GM18951 (cell line): ENCODE measurements at regions of chr4 and their contacts with region 1.

Region 1: DNA sequence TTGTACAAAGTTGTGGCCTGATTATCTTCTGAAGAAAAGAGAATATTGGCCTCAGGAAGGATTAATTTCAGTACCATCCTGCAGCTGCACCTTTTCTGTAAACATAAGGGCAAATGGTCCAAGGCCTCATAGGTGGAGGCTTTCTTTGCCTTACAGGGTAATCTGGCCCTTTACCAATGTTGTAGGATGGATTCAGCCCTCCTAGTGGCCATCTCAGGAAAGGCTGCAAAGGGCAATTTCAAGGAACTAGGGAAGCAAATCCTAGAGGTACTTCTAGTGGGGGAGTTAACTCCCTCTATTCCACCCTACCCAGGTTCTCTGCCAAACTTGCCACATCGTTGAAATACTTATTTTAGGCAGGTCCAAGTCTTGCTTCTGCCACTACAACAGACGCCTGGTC is 57.6 kb downstream of the UGT2B11 start:
- POLR2A ChIP-seq: no peak

Region 2: DNA sequence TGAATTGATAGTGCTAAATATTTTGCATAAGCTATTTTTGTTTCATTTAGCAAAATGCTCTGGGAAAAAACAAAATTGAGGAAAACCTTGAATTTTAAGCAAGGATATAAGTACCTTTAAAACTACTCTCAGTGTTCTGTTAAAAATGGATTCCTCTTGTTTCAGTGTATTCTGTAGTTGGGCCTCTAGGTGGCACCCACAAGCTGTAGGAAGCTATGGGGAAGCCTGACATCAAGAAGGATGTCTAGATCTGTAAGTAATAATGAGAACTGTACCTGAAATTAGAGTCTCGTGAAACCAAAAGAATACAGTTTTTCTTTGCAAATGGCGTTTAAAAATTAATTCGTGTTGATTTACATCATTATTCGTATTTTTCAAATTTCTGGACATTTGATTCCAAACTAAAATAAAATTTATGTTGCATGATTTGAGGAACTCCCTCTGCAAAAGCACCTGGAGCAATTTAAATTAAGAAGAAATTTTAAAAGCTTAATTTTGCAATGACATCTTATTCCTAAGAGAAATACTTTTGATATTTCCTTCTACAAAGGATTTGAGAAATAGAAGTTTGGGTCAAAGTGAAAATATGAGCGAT is 658.4 kb before region 1 on chr4:
- in situ Hi-C with region 1: loop called (anchors 25 kb)
- POLR2A ChIP-seq: no peak

Region 3: GRCh38 chr4:68917016-68917415 is 239.9 kb before region 1 on chr4:
- in situ Hi-C with region 1: no loop called
- POLR2A ChIP-seq: no peak